Left lung (tissue), 14 donors: ENCODE measurements at regions of chr12 and their contacts with region 1.

Region 1: DNA sequence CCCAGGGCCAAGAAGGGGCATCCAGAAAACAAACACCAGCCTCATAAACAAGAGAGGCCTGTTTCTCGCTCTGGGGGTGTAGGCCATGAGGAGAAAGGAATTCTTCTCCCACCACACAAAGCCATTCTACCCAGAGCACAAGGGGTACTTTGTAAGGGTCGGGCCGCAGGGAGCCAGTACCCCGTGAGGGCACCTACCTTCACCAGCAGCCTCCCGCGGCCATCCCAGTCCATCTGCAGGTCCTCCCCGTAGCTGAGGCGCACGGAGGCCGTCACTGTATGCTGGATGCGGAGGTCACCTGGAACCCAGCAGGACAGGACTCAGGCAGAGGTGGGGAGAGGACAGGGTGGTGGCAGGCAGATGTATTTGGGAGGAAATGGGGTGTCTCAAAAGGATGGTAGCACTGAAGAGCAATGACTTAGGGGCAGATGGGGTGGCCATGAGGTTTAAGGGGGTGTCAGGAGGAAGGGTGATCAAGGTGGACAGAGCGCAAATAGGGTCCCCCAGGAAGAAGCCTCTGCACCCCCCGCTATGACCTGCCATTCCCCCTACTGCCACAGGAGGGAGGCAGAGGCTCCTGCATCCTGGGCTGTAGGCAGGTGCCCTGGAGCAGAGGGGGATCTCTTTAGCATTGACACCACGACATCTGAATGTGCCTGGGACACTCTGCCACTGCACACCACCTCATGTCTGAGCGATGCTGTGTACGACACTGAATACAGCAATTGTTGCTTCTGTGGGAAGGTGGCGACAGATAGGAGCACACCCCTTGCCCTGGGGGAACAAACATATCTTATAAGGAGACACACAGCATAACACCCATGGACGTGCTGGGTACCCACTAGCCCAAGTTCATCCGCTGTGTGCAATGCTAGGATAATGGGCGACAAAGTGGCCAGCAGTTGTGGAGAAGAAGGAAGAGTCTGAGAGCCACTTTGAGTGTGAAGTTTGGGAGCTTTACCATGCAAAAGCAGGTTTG is 61.4 kb downstream of the VWF start:
- DNase-seq: peak in 2 of 4 donors; percentile 61 to 81
- ATAC-seq: peak; percentile 89
- H3K4me3 ChIP-seq: no peak overlapping the region
- H3K27ac ChIP-seq: no peak overlapping the region
- H3K4me1 ChIP-seq: peaks cover 0 to 2% of the 10 kb centered on the region in 2 donors
- H3K27me3 ChIP-seq: peaks cover 0 to under 1% of the 10 kb centered on the region in 2 donors
- CTCF ChIP-seq: peak; percentile 83 to 96

Region 2: DNA sequence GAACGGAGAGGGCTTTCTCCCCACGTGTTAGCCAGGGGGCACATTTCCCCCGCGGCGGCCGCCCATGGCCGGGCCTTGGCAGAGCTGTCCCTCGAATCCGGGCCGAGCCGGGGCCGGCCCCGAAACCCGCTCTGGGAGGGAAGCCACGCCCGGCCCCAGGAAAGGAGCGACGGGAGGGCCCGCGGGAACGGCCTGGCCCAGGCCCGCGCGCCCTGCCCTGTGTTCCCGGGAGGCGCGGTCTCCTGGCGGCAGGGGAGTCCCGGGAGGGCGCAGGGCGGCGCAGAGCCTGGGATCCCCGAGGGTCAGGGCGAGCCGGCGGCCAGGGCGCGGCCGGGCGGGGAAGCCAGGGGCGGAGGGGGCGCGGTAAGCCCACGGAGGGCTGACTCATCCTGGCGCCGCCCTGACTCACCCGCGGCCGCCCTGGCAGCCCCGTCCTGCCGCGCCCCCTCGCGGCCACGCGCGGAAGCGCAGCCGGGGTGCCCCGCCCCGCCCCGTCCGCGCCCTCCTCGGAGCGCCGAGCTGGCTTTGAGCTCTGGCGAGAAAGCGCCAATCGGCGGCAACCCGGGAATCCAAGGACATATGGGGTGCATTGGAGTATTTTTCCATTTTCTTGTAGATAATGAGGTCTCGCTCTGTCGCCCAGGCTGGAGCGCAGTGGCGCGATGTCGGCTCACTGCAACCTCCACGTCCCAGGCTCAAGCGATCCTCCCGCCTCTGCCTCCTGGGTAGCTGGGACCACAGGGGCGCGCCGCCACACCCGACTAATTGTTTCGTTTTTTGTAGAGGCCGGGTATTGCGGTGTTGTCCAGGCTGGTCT is 215.6 kb after region 1 on chr12:
- intact Hi-C with region 1: loop called in 1 of 2 experiments (anchors 5 kb)
- DNase-seq: peak; percentile 77 to 98 (median 86)
- ATAC-seq: peak; percentile 87
- H3K4me3 ChIP-seq: peak overlapping the region; percentile 39 to 45
- H3K27ac ChIP-seq: peak overlapping the region; percentile 88 to 91
- H3K4me1 ChIP-seq: peaks cover 27 to 52% of the 10 kb centered on the region in 2 donors
- H3K27me3 ChIP-seq: peaks cover 0 to 5% of the 10 kb centered on the region in 2 donors
- CTCF ChIP-seq: peak; percentile 97 to 98

Region 3: GRCh38 chr12:6285063-6285477 is 222.0 kb after region 1 on chr12:
- intact Hi-C with region 1: loop called (anchors 5 kb)
- DNase-seq: peak in 2 of 4 donors; percentile 67 to 85
- ATAC-seq: peak; percentile 87
- H3K4me3 ChIP-seq: no peak overlapping the region
- H3K27ac ChIP-seq: no peak overlapping the region
- H3K4me1 ChIP-seq: peaks cover 6 to 19% of the 10 kb centered on the region in 2 donors
- H3K27me3 ChIP-seq: no peaks in the 10 kb centered on the region
- CTCF ChIP-seq: peak; percentile 92 to 95